ENCODE measurements at regions of chr2 and their contacts with region 1.

Region 1: DNA sequence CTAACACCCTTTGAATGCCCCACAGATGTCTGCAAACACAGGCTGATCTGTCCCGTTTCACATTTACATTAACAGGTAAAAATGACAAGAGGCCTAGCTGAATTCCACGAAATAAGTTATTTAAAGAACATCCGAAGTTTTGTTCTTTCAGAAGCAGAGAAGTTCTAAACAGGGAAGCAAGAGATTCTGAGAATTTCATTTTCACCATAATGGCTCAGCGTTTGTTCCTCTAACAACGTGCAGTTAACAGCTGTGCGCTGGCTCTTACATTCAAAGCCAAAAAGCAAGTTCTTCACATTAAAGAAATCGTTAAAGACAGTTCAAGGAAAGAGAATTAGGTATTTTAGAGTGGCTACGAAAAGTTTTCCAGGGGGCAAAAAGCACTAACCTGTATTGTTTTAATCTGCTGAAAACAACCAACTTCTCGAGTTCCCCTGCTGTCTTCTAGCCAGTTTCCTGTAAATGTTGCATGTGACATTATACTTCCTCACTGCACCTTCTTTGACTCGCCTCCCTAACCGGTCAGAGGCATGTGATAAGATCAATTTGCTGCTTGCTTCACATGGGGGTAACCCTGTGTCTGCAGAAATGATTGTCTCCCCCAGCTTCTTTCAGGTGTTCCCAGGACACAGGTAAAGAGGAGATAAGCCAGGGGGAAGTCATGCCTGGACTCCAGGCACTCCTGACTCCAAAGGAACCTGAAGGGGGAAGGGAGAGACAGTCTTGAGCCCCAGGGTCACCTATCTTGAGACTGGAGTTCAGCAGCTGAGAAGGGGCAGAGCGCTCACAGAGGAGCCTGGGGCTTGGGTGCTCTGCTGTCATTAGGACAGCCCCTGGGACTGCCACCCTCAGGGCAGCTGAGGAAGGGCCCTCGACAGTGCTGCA is 36.8 kb upstream of the WIPF1 start:
- DNase-seq: peak; percentile 18 to 66 (median 36)
- ATAC-seq: peak; percentile 78 to 81
- H3K4me3 Mint-ChIP-seq: peak overlapping the region; percentile 86 to 97 (median 94)
- H3K27ac Mint-ChIP-seq: peak overlapping the region; percentile 90 to 99 (median 96)
- H3K4me1 Mint-ChIP-seq: peaks cover 43 to 74% (median 63%) of the 10 kb centered on the region in 4 donors
- H3K27me3 Mint-ChIP-seq: no peaks in the 10 kb centered on the region

Region 2: GRCh38 chr2:174603280-174603679 is 31.1 kb before region 1 on chr2:
- POLR2A ChIA-PET with region 1: interaction called, 19 read pairs
- DNase-seq: peak; percentile 13 to 75 (median 53)
- ATAC-seq: peak; percentile 73 to 85
- H3K4me3 Mint-ChIP-seq: peak overlapping the region in 6 of 10 donors; percentile 2 to 53 (median 22)
- H3K27ac Mint-ChIP-seq: peak overlapping the region; percentile 82 to 100 (median 96)
- H3K4me1 Mint-ChIP-seq: peaks cover 49 to 94% (median 85%) of the 10 kb centered on the region in 4 donors
- H3K27me3 Mint-ChIP-seq: no peaks in the 10 kb centered on the region

Region 3: GRCh38 chr2:174682578-174683391 is 48.4 kb after region 1 on chr2:
- POLR2A ChIA-PET with region 1: interaction called, 26 read pairs
- DNase-seq: peak; percentile 45 to 80 (median 66)
- ATAC-seq: peak; percentile 70 to 76
- H3K4me3 Mint-ChIP-seq: peak overlapping the region; percentile 86 to 98 (median 95)
- H3K27ac Mint-ChIP-seq: peak overlapping the region; percentile 84 to 99 (median 96)
- H3K4me1 Mint-ChIP-seq: peaks cover 19 to 67% (median 55%) of the 10 kb centered on the region in 4 donors
- H3K27me3 Mint-ChIP-seq: no peaks in the 10 kb centered on the region

Measured in naive thymus-derived CD8-positive, alpha-beta T cell (primary cell).